Activated CD4-positive, alpha-beta memory T cell treated with anti-CD3 and anti-CD28 coated beads for 36 hours (primary cell): ENCODE measurements at regions of chr16 and their contacts with region 1.

Region 1: DNA sequence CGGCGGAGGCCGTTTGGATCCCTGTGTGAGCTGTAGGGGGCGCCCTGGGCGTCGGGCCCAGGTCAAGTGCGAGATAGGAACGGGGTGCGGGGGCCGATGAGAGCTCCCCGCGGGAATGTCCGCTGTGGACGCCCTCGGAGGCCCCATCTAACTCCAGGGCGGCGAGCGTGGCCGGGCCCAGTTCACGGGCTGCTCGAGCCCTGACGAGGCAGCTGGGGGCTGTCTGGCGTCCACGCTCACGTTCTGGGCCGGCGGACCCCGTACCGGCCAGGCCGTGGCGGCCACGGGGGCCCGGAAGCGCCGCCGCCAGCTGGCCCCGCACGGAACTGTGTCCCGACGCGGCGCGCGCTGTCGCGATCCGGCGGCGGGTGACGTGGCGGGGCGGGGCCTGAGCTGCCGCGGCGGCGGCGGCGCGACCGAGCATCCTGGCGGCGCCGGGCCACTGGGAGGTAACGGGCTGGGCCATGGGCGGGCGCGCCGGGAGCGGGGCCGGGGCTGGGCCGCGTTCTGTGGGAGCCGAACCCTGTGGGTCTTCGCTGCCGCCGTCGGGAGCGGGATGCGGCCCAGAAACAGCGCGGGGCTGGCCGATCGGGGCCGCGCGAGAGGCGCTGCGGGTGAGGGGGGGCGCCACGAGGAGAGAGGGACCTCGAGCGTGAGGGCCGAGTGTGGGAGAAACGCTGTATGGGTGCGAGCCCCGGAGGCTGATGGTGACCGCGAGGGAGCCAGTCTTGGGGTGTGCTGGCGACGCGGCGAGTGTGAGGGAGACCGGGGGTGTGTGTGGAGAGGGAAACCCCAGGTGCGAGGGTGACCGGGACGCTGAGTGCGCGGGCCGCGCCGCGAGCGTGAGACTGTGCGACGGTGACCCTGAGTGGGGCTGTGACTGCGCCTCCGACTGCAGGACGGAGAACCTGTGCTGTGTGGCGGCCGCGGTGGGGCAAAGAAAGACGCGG is at the start of gene SLC7A6:
- DNase-seq: peak; percentile 92
- H3K4me3 Mint-ChIP-seq: peak within 1 kb of the TSS; percentile 96
- H3K27ac Mint-ChIP-seq: peak within 1 kb of the TSS; percentile 95
- H3K4me1 Mint-ChIP-seq: peaks cover 43% of the 10 kb centered on the region
- H3K27me3 Mint-ChIP-seq: no peaks in the 10 kb centered on the region
- total RNA-seq, gene SLC7A6: 62.8 to 63.8 TPM

Region 2: GRCh38 chr16:68237243-68238028 is 27.0 kb before region 1 on chr16:
- CTCF ChIA-PET with region 1: interaction called, 23 read pairs
- POLR2A ChIA-PET with region 1: interaction called, 3 read pairs
- intact Hi-C with region 1: no loop called
- DNase-seq: peak; percentile 95
- H3K4me3 Mint-ChIP-seq: peak overlapping the region; percentile 91
- H3K27ac Mint-ChIP-seq: peak overlapping the region; percentile 86
- H3K4me1 Mint-ChIP-seq: peaks cover 28% of the 10 kb centered on the region
- H3K27me3 Mint-ChIP-seq: no peaks in the 10 kb centered on the region

Region 3: GRCh38 chr16:68251832-68252231 is 12.6 kb before region 1 on chr16:
- CTCF ChIA-PET with region 1: interaction called, 27 read pairs
- POLR2A ChIA-PET with region 1: no interaction called
- intact Hi-C with region 1: no loop called
- DNase-seq: no peak
- H3K4me3 Mint-ChIP-seq: no peak overlapping the region
- H3K27ac Mint-ChIP-seq: no peak overlapping the region
- H3K4me1 Mint-ChIP-seq: peaks cover 3% of the 10 kb centered on the region
- H3K27me3 Mint-ChIP-seq: no peaks in the 10 kb centered on the region

Region 4: GRCh38 chr16:68289621-68290329 is 25.4 kb after region 1 on chr16:
- CTCF ChIA-PET with region 1: interaction called, 237 read pairs
- POLR2A ChIA-PET with region 1: interaction called, 23 read pairs
- intact Hi-C with region 1: loop called (anchors 1 kb)
- DNase-seq: peak; percentile 84
- H3K4me3 Mint-ChIP-seq: peak overlapping the region; percentile 12
- H3K27ac Mint-ChIP-seq: peak overlapping the region; percentile 93
- H3K4me1 Mint-ChIP-seq: peaks cover 84% of the 10 kb centered on the region
- H3K27me3 Mint-ChIP-seq: no peaks in the 10 kb centered on the region

Region 5: DNA sequence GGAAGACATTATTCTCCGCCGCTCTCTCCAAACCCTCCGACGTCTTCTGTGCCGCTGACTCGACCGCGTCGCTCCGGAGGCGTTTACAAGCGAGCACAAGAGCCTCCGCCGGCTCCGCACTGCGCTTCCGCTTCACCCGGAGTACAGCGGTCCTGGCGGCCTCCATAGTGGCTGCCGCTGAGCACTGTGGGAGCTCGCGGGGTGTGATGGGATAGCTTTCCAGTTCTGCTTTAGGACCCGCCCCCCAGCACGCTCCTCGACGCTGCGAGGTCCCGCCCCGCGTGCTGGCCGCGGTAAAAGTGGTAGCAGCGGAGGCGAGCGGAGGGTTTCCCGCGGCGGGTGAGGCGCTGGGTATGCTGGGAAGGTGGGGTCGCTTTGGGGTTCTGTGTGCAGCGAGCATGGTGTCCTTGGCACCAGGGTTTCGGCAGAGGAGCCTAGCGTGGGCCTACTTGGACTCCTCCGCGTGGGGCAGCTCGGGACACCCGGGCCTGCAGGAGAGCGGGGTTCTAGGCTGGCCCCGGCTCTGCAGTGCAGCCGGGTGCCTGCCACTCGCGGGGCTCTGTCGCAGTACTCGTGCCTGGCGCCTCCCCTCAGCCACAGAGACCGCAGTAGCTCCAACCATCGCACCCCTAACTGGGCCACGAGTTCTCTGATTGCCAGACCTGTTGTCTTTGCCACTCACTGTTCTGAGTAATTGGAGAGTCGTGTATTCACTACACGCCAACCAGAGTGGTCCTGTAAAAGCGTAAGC is 46.5 kb after region 1 on chr16 and contains the starts of genes PRMT7 and SLC7A6OS:
- CTCF ChIA-PET with region 1: interaction called, 106 read pairs
- POLR2A ChIA-PET with region 1: interaction called, 45 read pairs
- intact Hi-C with region 1: loop called (anchors 1 kb)
- DNase-seq: peak; percentile 96
- H3K4me3 Mint-ChIP-seq: peak within 1 kb of the TSS; percentile 89
- H3K27ac Mint-ChIP-seq: peak within 1 kb of the TSS; percentile 93
- H3K4me1 Mint-ChIP-seq: peaks cover 52% of the 10 kb centered on the region
- H3K27me3 Mint-ChIP-seq: no peaks in the 10 kb centered on the region
- total RNA-seq, gene PRMT7: 60.4 to 62.8 TPM
- total RNA-seq, gene SLC7A6OS: 20.6 to 22.2 TPM

Region 6: DNA sequence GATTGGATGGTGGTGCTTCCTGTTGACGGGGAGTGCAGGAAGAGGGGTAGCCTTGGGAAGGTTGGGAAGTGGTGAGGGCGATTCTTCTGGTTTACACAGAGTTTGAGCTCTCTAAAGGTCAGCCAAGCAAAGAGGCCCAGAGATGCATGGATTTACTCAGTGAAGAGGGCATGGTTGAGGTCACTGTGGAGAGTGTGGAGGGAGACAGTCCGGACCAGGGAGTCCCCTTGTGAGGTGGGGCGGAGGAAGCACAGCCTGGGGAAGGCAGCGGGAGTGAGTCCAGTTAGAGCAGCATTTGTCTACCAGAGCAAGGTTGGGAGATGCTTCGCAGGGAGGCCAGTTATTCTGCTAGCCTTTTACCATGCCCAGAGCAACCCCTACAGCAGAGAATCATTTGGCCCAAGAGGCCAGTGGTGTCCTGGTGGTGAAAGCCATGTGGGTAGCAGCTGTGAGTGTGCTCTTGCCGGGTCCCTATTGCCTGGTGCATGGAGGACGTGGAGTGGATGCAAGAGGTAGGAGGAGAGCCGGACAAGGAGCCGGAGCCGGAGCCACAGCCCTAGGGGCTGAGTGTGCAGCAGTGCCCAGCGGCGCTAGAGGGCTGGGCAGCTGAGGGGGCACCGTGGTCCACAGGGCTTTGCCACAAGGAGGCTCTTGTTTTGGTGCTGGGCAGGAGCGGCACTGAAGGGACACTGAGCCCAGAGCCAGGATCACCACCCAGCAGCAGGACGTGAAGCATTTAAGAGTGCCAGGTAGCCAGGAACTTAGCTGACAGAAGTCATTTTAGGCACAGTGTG is 74.1 kb after region 1 on chr16:
- CTCF ChIA-PET with region 1: interaction called, 571 read pairs
- POLR2A ChIA-PET with region 1: no interaction called
- intact Hi-C with region 1: no loop called
- DNase-seq: no peak
- H3K4me3 Mint-ChIP-seq: no peak overlapping the region
- H3K27ac Mint-ChIP-seq: no peak overlapping the region
- H3K4me1 Mint-ChIP-seq: no peaks in the 10 kb centered on the region
- H3K27me3 Mint-ChIP-seq: no peaks in the 10 kb centered on the region

Region 7: DNA sequence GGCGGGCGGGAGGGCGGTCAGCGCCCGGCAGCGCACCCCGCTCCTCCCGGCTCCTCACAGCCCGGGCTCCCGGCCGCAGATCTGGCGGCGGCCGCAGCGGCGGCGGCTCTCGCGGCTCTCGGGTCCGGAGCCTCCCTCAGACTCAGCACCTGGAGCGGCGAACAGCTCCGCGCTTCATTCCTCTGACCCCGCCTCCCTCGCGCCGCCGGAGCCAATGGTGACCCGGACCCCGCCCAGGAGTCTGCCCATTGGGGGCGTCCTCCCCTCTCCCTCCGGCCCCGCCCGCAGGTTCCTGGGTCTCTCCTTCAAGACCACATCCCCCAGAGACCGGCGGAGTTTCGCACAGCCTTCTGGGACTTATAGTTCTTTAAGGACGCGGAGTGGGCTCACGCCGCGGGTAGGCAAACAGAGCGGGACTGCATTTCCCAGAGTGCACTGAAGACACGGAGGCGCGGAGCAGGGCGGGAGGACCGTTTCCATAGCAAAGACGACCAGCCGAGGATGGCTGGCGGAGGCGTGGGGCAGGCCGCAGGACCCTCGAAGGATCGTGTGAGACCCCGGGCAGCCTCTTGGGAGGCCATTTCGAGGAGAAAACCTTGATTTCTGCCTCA is 184.1 kb after region 1 on chr16 and contains the start of gene SMPD3:
- CTCF ChIA-PET with region 1: interaction called, 3 read pairs
- POLR2A ChIA-PET with region 1: interaction called, 3 read pairs
- intact Hi-C with region 1: loop called (anchors 10 kb)
- DNase-seq: peak; percentile 99
- H3K4me3 Mint-ChIP-seq: peak within 1 kb of the TSS; percentile 73
- H3K27ac Mint-ChIP-seq: no peak within 1 kb of the TSS
- H3K4me1 Mint-ChIP-seq: peaks cover 20% of the 10 kb centered on the region
- H3K27me3 Mint-ChIP-seq: peaks cover 17% of the 10 kb centered on the region
- total RNA-seq, gene SMPD3: 0.07 to 0.12 TPM

Region 8: GRCh38 chr16:68486502-68487202 is 222.2 kb after region 1 on chr16:
- CTCF ChIA-PET with region 1: no interaction called
- POLR2A ChIA-PET with region 1: no interaction called
- intact Hi-C with region 1: no loop called
- DNase-seq: no peak
- H3K4me3 Mint-ChIP-seq: no peak overlapping the region
- H3K27ac Mint-ChIP-seq: no peak overlapping the region
- H3K4me1 Mint-ChIP-seq: no peaks in the 10 kb centered on the region
- H3K27me3 Mint-ChIP-seq: no peaks in the 10 kb centered on the region